Right ventricle myocardium superior (tissue), 1 donor: ENCODE measurements at regions of chr11 and their contacts with region 1.

Region 1: DNA sequence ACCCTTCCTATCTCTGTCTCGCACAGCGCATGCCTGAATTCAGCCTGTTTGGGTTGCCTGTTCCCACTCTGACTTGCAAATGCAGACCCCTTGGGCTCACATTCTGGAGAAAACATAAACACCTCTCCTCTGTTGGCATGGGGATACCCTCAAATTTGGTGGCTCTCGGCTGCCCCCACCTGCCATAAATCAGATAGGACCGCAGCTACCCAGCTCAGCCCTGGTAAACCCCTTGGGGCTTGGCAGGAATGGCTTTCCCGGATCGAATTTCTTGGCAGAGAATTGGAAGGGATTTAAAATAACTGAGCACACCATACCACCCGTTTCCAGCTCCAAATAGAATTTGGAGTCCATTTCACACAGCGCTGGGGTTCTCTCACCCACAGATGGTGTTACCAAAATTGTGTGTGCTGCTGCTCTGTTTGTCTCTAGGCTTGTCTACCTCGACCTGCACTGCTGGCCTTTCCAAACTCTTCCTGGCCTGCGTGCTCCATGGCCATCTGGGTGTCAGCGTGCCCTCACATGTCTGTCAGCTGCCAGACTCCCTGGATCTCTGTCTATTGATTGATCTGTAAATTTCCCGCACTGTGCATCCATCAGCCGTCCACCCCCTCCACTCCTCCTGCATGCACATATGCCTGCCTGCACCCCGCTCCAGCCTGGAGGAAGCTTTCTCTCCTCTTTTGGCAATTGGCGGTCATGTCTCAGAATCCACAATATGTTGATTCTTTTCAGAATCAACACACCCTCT is 134.0 kb downstream of the NTM start:
- DNase-seq: no peak
- ATAC-seq: peak; percentile 79

Region 2: GRCh38 chr11:131246663-131247062 is 257.7 kb before region 1 on chr11:
- intact Hi-C with region 1: loop called (anchors 5 kb)
- DNase-seq: peak; percentile 63
- ATAC-seq: peak; percentile 79

Region 3: DNA sequence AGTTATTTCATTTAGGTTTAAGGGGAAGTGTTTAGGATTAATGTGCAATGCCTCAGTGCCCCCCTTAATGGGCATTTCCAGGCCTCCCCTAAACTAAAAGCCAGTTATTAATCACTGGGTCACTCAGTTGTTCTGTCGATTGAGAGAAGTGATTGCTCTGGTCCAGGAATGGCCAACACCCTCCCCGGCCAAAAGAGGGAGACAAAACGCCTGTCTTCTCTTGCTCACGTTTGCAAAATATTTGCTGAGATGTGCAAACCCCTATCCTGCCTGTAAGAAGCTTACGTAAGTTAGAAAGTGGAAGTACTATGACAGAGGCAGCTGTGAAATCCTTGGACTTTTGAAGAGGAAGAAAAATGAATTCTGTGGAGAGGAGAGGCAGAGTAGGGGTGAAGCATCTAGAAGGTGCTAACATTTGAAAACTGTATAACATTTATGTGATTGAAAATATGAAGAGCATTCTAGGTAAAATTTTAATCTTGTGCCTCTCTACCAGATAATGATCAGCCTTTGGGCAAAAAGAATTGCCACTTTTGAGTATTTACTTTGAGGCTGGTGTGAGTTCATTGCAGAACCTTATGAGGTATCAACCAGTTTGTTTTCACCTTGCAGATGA is 96.2 kb before region 1 on chr11:
- intact Hi-C with region 1: loop called (anchors 2 kb)
- DNase-seq: peak; percentile 46
- ATAC-seq: peak; percentile 70